Sciatic nerve (tissue), 2 donors: ENCODE measurements at regions of chr14 and their contacts with region 1.

Region 1: GRCh38 chr14:94485944-94486841 is 10.2 kb upstream of the SERPINA9 start:
- DNase-seq: peak; percentile 77
- ATAC-seq: peak; percentile 86

Region 2: GRCh38 chr14:94026173-94026888 is 459.9 kb before region 1 on chr14 and contains the start of gene OTUB2:
- intact Hi-C with region 1: no loop called
- DNase-seq: peak; percentile 98
- ATAC-seq: peak; percentile 100
- total RNA-seq, gene OTUB2: 0.80 TPM

Region 3: GRCh38 chr14:94144765-94145164 is 341.4 kb before region 1 on chr14:
- intact Hi-C with region 1: loop called (anchors 5 kb)
- DNase-seq: no peak
- ATAC-seq: peak; percentile 39

Region 4: GRCh38 chr14:94355191-94355797 is 130.9 kb before region 1 on chr14:
- intact Hi-C with region 1: loop called (anchors 10 kb)
- DNase-seq: peak; percentile 80
- ATAC-seq: peak; percentile 95

Region 5: DNA sequence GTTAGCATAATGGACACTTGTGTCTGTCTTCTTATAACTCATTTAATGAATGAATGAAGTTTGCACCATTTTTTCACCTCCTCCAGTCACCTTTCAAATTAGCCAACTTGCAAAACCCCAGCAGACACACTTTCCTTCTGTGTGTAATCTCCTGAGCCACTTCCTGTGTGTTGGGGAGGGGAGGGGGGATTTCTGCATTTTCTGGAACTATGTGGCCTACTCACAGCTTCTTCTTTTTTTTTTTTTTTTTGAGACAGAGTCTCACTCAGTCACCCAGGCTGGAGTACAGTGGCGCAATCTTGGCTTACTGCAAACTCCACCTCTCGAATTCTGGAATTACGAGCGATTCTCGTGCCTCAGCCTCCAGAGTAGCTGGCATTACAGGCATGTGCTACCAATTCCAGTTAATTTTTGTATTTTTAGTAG is 93.7 kb before region 1 on chr14:
- intact Hi-C with region 1: no loop called
- DNase-seq: no peak
- ATAC-seq: peak; percentile 34

Region 6: DNA sequence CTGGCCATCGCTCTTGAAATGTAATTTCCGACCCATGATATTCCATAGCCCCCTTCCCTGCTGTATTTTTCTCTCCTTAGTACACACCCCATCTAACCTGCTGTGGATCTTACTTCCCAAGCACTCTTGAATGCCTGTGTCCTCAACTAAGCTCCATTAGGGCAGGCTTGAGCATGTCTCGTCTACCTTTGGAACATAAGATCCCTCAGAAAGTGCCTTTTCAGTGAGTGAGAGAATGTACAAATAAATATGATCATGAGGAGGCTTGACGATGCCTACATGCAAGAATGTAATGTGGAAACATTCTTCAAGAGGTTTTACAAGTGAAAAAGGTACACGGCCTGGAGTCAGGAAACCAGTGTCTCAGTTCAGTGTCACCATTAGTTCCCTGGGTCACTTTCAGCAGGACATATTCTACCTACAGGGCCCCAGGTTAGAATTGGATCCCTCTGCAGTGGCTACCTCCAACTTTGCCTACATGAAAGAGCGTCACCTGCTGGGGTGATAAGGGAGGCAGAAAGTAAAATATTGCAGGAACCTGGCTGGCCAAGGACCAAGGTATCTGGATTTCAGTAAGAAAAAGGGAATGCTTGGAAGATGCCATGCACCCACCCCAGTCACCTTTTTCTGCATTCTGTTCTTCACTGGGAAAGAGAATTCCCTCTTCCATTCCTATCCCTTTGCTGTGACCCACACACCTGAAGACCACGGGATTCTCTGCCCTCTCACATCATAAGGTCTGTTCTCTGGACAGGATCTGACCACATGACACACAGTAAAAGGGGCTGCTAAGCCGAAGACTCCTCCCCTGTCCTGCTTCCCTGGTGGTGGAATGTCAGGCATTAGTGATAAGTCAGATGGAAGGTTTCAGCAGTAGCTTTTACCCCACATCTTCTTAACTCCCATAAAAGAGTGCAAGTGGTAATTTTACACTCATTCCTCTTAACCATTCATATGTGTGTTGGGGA is 73.2 kb before region 1 on chr14:
- intact Hi-C with region 1: no loop called
- DNase-seq: no peak
- ATAC-seq: no peak